ENCODE measurements at regions of chr1 and their contacts with region 1.

Region 1: DNA sequence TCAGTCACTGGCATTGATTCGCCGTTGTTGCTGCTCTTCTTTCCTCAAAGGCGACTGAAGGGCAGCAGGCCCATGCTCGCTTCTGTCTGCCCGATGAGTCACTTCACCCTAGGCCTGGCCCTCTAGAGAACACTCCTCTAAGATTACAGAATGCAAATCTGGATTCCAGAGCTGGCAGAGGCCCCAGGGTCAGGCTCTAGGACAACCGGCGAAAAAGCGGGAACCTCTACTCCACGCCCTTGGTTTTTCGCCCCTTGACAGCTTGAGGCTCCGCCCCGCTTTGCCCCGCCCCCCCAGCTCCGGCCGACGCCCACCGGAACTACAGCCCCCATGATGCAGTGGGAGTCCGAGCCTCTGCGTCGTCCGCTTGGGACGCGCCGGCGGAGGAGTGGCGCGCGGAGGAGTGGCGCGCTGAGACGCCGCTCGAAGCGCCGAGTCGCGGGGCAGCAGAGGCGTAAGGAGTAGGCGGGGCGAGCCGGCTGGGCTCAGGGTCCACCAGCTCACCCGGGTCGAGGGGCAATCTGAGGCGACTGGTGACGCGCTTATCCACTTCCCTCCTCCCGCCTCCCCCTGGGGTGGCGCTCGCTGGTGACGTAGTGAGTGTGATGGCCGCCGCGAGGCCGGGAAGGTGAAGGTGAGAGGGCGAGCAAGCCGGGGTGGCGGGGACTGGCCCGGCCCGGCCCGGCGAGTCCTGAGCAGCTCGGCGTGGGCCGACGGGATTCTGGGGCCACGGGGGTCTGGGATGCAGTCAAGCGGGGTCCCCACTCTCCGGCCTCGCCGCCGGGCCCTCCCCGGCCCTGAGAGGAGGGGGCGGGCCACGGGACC is at the start of gene MFN2:
- DNase-seq: peak; percentile 96
- ATAC-seq: peak; percentile 89
- H3K4me3 ChIP-seq: peak within 1 kb of the TSS; percentile 81
- H3K27ac ChIP-seq: peak within 1 kb of the TSS; percentile 81
- H3K4me1 ChIP-seq: peaks cover 28% of the 10 kb centered on the region
- H3K27me3 ChIP-seq: no peaks in the 10 kb centered on the region
- CTCF ChIP-seq: no peak
- total RNA-seq, gene MFN2: 97.8 and 101 TPM in 2 replicates

Region 2: GRCh38 chr1:11858968-11859871 is 120.8 kb before region 1 on chr1:
- CTCF ChIA-PET with region 1: no interaction called
- POLR2A ChIA-PET with region 1: no interaction called
- intact Hi-C with region 1: no loop called
- DNase-seq: peak; percentile 51
- ATAC-seq: peak; percentile 48; the same call in 1 of the 2 replicates
- H3K4me3 ChIP-seq: no peak overlapping the region
- H3K27ac ChIP-seq: no peak overlapping the region
- H3K4me1 ChIP-seq: no peaks in the 10 kb centered on the region; the same call in 1 of the 2 replicates
- H3K27me3 ChIP-seq: peaks cover 40% of the 10 kb centered on the region
- CTCF ChIP-seq: 0 out of 2 replicates have a peak, but pooled peaks have one; percentile 28

Region 3: DNA sequence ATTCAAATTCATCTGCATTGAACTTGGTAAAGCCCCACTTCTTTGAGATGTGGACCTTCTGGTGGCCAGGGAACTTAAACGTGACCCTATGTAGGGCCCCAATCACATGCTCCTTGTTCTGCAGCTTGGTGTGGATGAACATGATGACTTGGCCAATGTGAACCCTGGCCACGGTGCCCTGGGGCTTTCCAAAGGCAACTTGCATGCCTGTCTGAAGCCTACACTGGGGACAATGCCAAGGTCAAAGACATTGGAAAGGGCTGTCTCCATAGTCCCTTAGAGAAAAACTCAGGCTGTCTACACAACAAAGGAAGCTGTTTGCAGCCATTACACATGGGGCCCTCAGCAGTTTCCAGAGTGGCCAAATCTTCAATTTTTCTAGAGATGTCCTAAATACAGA is 240.8 kb after region 1 on chr1:
- CTCF ChIA-PET with region 1: no interaction called
- POLR2A ChIA-PET with region 1: no interaction called
- intact Hi-C with region 1: no loop called
- DNase-seq: no peak
- ATAC-seq: no peak
- H3K4me3 ChIP-seq: no peak overlapping the region
- H3K27ac ChIP-seq: no peak overlapping the region
- H3K4me1 ChIP-seq: no peaks in the 10 kb centered on the region
- H3K27me3 ChIP-seq: no peaks in the 10 kb centered on the region
- CTCF ChIP-seq: no peak

Region 4: DNA sequence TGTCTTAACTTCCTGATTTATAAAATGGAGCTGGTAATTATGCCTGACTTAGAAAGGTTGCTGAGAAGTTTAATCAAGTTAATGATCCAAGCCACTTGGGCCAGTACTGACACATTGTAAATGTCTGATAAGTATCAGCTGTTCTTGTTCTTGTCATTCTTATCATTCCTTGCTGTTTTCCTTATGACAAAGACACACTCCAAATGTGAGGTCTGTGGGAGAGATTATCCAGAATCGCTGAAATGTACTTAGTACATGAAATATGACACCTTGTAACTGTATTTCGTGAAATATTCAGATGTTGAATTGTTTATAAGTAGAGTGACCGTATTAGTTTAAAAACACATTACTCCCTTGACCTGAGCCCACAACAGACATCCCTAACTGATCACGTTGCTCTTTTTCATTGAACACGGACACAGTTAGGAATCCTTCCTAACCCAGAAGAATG is 669.9 kb after region 1 on chr1:
- CTCF ChIA-PET with region 1: no interaction called
- POLR2A ChIA-PET with region 1: interaction called, 15 read pairs
- intact Hi-C with region 1: no loop called
- DNase-seq: no peak
- ATAC-seq: no peak
- H3K4me3 ChIP-seq: no peak overlapping the region
- H3K27ac ChIP-seq: no peak overlapping the region
- H3K4me1 ChIP-seq: no peaks in the 10 kb centered on the region
- H3K27me3 ChIP-seq: no peaks in the 10 kb centered on the region
- CTCF ChIP-seq: no peak

Measured in PC-3 (cell line).